Activated naive CD4-positive, alpha-beta T cell treated with anti-CD3 and anti-CD28 coated beads for 36 hours (primary cell): ENCODE measurements at regions of chr6 and their contacts with region 1.

Region 1: DNA sequence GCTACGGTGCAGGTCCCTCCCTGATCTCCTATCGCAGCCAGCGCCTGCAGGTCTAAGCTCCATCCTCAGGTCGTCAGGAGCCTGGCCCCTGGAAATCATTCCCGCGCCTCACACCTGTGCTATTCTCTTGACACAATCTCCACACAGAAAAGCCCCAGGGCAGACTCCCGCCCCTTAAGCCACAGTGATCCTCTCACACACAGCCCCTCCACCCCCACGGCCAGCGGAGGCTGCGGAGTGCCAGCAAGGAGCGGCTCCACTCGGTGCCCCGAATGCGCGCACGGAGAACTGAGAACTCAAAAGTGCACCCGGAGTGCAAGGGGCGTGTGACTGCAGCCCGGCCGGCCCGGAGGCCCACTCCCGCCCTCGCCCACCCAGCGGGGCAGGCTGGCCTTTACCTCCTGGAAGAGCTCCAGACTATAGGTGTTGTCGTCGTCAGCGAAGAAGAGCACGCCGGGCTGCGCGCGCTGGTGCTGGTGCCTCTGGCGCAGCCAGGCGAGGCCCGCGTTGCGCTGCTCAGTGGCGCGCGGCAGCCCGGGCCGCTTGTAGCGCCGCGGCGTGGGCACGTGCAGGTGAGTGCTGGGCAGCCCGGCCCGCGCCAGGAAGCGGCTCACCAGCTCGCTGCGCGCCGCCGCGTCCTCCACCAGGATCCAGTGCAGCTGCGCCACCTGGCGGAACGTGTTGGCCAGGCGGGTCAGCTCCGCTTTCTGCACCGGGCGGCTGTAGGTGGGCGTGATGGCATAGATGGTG is 1.2 kb downstream of the B3GAT2 start:
- DNase-seq: peak; percentile 93
- H3K4me3 Mint-ChIP-seq: peak overlapping the region; percentile 74
- H3K27ac Mint-ChIP-seq: no peak overlapping the region
- H3K4me1 Mint-ChIP-seq: peaks cover 4% of the 10 kb centered on the region
- H3K27me3 Mint-ChIP-seq: peaks cover 49% of the 10 kb centered on the region

Region 2: DNA sequence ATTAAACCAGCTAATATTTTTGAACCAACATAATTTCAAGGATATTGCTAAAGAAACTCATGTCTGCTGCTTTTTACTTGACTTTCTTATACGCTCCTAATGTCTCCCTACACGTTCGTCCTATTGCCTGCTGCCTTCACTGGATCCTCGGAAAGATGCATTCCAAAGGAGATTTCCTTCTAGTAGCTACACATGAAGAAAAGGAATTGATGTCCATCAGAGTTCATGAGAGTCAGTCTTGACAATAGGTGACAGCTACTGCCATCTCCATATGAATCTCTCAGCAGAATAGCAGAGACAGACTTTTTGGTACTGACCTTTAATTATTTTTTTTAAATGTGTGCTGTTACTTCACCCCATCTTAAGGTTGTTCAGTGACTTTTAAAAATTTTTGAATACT is 628.6 kb before region 1 on chr6:
- CTCF ChIA-PET with region 1: no interaction called
- intact Hi-C with region 1: no loop called
- DNase-seq: no peak
- H3K4me3 Mint-ChIP-seq: no peak overlapping the region
- H3K27ac Mint-ChIP-seq: no peak overlapping the region
- H3K4me1 Mint-ChIP-seq: no peaks in the 10 kb centered on the region
- H3K27me3 Mint-ChIP-seq: peaks cover 4% of the 10 kb centered on the region

Region 3: GRCh38 chr6:70520575-70520974 is 435.0 kb before region 1 on chr6:
- CTCF ChIA-PET with region 1: interaction called, 4 read pairs
- intact Hi-C with region 1: loop called (anchors 1 kb)
- DNase-seq: peak; percentile 24
- H3K4me3 Mint-ChIP-seq: no peak overlapping the region
- H3K27ac Mint-ChIP-seq: no peak overlapping the region
- H3K4me1 Mint-ChIP-seq: peaks cover 7% of the 10 kb centered on the region
- H3K27me3 Mint-ChIP-seq: no peaks in the 10 kb centered on the region

Region 4: GRCh38 chr6:71012866-71013469 is 57.4 kb after region 1 on chr6:
- CTCF ChIA-PET with region 1: interaction called, 10 read pairs
- intact Hi-C with region 1: loop called (anchors 5 kb)
- DNase-seq: peak; percentile 17
- H3K4me3 Mint-ChIP-seq: no peak overlapping the region
- H3K27ac Mint-ChIP-seq: no peak overlapping the region
- H3K4me1 Mint-ChIP-seq: no peaks in the 10 kb centered on the region
- H3K27me3 Mint-ChIP-seq: peaks cover 11% of the 10 kb centered on the region